Posterior vena cava (tissue), 2 donors: ENCODE measurements at regions of chr1 and their contacts with region 1.

Region 1: DNA sequence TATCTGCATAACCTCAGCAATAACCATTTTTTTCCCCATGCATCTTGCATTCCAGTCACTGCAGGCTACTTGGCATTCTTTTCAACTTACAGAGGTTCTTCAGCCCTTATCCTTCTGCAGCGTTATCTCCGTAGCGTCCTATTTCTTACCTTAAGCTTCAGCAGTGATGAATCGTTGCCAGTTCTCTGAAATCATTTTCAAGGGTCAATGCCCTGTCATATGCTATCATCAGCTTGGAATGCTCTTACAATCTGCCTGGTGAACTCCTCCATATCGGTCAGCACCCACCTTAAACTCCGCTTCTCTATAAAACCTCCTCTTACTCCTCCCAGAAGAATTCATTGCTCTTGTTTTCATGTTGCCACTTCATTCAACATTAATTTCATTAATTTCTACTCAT is 105.1 kb upstream of the DPH5 start:
- DNase-seq: no peak

Region 2: DNA sequence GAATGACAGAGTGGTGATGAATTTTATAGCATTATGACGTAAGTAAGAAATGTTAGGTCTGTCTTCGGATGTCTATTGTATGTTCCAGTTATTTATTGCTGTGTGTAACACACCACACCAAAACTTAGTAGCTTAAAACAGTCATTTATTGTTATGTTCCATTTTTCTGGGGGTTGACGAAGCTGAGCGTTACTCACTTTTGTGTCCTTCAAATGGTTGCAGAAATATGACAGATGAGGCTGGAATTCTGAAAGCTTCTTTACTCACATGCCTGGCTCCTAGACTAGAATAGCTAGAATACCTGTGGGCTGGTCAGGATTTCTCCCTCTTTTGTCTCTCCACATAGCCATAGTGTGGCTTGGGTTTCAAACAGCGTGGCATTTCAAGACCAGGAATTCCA is 44.0 kb after region 1 on chr1:
- intact Hi-C with region 1: loop called in 1 of 2 experiments (anchors 1 kb)
- DNase-seq: no peak